Activated CD4-positive, alpha-beta T cell treated with anti-CD3 and anti-CD28 coated beads, Interleukin-2, amount 10 ng/mL, durations not matched to agents 24 days and 14 days (primary cell): ENCODE measurements at regions of chr6 and their contacts with region 1.

Region 1: GRCh38 chr6:38973178-38974054 is 75.2 kb upstream of the GLP1R start:
- DNase-seq: peak; percentile 74
- H3K4me3 Mint-ChIP-seq: no peak overlapping the region
- H3K27ac Mint-ChIP-seq: no peak overlapping the region
- H3K4me1 Mint-ChIP-seq: no peaks in the 10 kb centered on the region
- H3K27me3 Mint-ChIP-seq: peaks cover 45% of the 10 kb centered on the region

Region 2: GRCh38 chr6:38631186-38631783 is 342.1 kb before region 1 on chr6:
- intact Hi-C with region 1: no loop called
- DNase-seq: no peak
- H3K4me3 Mint-ChIP-seq: no peak overlapping the region
- H3K27ac Mint-ChIP-seq: no peak overlapping the region
- H3K4me1 Mint-ChIP-seq: peaks cover 13% of the 10 kb centered on the region
- H3K27me3 Mint-ChIP-seq: no peaks in the 10 kb centered on the region

Region 3: DNA sequence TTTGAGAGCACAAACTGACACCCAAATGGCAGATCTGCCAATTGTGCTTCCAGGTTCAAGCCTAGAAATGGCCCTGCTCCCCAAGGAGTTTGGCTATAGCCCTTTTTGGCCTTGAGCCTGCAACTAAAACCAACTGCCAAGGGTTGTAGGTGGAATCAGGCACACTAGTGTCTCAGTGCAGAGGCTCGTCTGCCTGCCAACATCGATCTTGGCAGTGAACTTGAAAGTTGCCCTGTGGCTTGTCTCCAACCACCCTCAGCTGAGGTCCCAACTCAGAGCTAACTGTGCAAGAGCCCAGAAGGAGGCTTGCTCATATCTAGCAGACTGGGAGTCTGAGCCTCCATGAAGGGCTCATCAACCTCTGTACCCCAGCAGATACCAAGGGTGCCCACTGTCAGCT is 17.6 kb before region 1 on chr6:
- intact Hi-C with region 1: no loop called
- DNase-seq: no peak
- H3K4me3 Mint-ChIP-seq: no peak overlapping the region
- H3K27ac Mint-ChIP-seq: no peak overlapping the region
- H3K4me1 Mint-ChIP-seq: no peaks in the 10 kb centered on the region
- H3K27me3 Mint-ChIP-seq: peaks cover 37% of the 10 kb centered on the region

Region 4: DNA sequence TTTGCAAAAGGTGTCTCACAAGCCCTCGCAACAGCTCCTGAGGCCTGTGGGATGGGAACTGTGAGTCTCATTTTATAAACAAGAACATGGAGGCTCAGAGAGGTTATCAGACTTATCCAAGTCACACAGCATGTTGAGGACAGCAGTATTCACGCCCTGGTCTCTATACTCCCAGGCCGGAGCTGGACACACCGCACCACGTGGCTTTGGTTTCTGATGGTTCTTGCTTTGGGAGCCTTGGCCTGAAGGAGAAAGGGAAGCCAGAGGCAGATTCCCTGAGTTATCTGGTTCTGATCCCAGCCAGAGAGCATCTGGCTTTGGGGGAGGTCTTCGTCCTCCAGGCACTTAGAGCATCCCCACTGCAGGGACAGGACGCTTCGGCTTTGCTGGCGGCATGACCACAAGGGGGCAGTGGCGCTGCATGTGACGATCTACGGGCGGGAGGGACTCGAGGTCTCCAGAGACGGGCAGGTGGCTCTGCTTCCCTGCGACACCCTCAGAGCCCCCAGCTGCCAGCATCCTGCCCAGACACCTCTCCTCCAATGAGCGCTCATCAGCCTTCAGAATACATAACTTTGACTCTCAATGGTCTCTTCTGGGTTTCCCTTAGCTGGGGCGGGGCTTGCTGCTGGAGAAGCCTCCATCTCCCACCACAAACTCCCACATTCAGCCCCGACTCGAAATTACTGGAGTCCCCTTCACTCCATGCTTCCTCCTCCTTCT is 192.9 kb after region 1 on chr6:
- intact Hi-C with region 1: loop called (anchors 10 kb)
- DNase-seq: peak; percentile 95
- H3K4me3 Mint-ChIP-seq: no peak overlapping the region
- H3K27ac Mint-ChIP-seq: no peak overlapping the region
- H3K4me1 Mint-ChIP-seq: peaks cover 8% of the 10 kb centered on the region
- H3K27me3 Mint-ChIP-seq: no peaks in the 10 kb centered on the region